ENCODE measurements at regions of chr3 and their contacts with region 1.

Region 1: GRCh38 chr3:191244242-191244867 is 45.3 kb downstream of the OSTN start:
- DNase-seq: no peak
- ATAC-seq: no peak

Region 2: DNA sequence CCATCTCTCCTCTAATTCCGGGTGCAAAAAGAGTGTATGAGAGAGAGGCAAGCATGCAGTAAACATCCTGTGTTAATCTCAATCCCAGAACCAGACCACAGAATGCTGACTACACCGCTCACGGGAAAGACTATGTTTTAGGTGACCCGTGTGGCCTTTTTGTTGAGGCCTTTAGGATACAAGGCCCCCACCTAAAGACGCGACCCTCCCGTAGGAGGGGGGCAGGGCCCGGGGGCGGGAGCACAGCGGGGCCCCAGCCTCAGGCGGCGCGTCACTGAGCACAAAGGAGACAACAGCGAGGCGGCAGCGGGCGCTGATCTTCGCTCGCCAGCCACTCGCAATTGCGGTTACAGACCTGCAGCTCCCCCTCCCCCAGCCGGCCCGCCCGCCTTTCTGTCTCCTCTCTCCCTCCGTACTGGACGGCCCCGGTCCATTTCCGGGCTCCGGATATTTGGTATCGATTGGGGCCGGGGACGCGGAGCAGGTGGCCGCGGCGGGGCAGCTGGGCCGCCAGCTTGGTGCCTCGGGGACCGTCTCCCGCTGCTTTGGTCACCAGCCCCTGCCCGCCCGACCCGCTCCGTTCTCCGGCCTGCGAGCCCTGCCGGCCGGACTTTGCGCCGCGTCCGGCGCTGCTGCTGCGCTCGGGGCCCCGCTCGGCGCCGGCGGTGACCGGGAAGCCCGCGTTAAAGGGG is 84.8 kb after region 1 on chr3 and contains the start of gene CCDC50:
- intact Hi-C with region 1: loop called in 1 of 2 experiments (anchors 5 kb)
- DNase-seq: peak; percentile 90
- ATAC-seq: peak; percentile 90 to 92
- total RNA-seq, gene CCDC50: 53.1 to 69.0 TPM

Region 3: DNA sequence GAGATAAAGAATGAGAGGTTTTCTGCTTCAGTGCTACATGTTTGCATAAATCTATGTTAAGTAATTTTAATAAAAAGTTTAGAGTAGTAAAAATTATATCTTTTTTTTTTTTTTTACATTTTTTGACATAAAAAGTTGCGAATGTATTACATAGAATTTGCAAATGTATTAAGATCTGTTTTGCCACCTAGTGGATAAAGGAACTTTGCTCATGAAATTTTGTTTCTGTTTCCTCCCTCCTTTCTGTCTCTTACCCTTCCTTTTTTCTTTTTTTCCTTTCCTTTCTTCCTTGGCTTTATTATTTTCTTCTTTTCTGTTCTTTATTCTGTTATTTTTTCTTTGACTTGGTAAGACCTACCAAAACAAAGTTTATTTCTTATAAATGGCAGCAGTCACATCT is 144.5 kb after region 1 on chr3:
- intact Hi-C with region 1: loop called in 1 of 2 experiments (anchors 10 kb)
- DNase-seq: no peak
- ATAC-seq: no peak

Region 4: GRCh38 chr3:191499307-191500080 is 255.1 kb after region 1 on chr3:
- intact Hi-C with region 1: no loop called
- DNase-seq: peak; percentile 56
- ATAC-seq: peak; percentile 34 to 62